ENCODE measurements at regions of chr13 and their contacts with region 1.

Region 1: DNA sequence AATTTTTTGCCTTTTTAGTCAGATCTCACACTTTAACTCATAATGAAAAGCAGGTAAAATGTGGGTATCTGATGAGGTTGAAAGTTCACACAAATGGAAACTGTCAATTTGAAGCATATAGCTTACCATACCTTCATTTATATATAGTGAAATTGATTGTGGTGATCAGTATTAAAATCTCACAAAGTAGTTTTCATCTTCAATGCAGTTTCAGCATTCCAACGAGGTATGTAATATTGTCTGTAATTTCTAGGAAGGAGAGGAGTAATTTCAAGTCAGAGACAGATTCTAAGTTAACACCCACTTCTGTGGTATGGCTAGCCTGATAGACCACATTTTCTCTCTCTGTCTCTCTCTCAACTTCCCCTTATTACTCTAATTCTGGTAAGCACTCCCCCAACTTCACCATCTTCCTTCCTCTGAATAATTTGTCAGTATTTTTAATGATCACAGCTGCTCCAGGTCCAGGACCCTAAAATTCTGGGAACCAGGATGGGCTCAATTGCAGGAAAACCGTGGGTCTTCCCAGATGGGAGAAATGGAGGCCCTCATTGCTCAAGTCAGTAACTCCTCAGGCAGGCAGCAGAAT is 455.7 kb downstream of the FGF9 start:
- DNase-seq: no peak
- H3K4me3 Mint-ChIP-seq: peak overlapping the region; percentile 18
- H3K27ac Mint-ChIP-seq: peak overlapping the region; percentile 76
- H3K4me1 Mint-ChIP-seq: peaks cover 40% of the 10 kb centered on the region
- H3K27me3 Mint-ChIP-seq: no peaks in the 10 kb centered on the region

Region 2: GRCh38 chr13:21853779-21854178 is 272.7 kb before region 1 on chr13:
- intact Hi-C with region 1: no loop called
- DNase-seq: no peak
- H3K4me3 Mint-ChIP-seq: no peak overlapping the region
- H3K27ac Mint-ChIP-seq: no peak overlapping the region
- H3K4me1 Mint-ChIP-seq: no peaks in the 10 kb centered on the region
- H3K27me3 Mint-ChIP-seq: peaks cover 3% of the 10 kb centered on the region

Region 3: DNA sequence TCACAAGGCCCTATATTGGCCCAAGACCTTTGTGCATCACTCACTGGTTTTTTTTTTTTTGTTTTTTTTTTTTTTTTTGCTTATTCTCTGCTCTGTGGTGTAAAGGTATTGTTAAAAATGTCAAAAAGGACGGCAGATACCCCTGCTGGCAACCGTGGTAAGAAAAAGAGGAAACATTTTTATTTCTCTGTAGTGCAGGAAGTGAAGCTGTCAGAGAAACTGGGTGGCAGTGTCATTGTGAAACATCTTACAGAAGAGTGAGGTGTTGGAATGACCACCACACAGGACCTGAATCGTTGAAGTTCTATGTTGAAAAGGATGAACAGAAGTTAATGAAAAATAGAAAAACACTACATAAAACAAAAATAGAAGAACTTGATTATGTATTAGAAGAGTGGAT is 109.3 kb before region 1 on chr13:
- intact Hi-C with region 1: loop called (anchors 5 kb)
- DNase-seq: peak; percentile 62
- H3K4me3 Mint-ChIP-seq: no peak overlapping the region
- H3K27ac Mint-ChIP-seq: no peak overlapping the region
- H3K4me1 Mint-ChIP-seq: peaks cover 5% of the 10 kb centered on the region
- H3K27me3 Mint-ChIP-seq: no peaks in the 10 kb centered on the region

Region 4: DNA sequence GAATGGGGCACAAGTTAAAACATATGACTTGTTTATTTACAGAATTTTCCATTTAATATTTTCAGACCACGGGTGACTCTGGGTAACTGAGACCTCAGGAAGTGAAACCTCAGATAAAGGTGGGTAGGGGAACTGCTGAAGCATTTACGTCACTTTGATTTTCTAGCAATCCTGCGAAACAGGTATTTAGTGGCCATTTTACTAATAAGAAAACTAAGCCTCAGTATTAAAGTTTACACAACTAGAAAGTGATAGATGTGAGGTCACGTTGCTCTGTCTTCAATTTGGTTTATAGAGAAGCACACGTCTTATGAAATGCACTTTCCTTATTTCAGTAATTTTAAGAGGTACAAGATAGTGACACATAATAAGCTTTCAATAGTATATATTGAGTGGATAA is 52.8 kb before region 1 on chr13:
- intact Hi-C with region 1: loop called (anchors 1 kb)
- DNase-seq: no peak
- H3K4me3 Mint-ChIP-seq: peak overlapping the region; percentile 15
- H3K27ac Mint-ChIP-seq: peak overlapping the region; percentile 58
- H3K4me1 Mint-ChIP-seq: peaks cover 42% of the 10 kb centered on the region
- H3K27me3 Mint-ChIP-seq: no peaks in the 10 kb centered on the region

Region 5: DNA sequence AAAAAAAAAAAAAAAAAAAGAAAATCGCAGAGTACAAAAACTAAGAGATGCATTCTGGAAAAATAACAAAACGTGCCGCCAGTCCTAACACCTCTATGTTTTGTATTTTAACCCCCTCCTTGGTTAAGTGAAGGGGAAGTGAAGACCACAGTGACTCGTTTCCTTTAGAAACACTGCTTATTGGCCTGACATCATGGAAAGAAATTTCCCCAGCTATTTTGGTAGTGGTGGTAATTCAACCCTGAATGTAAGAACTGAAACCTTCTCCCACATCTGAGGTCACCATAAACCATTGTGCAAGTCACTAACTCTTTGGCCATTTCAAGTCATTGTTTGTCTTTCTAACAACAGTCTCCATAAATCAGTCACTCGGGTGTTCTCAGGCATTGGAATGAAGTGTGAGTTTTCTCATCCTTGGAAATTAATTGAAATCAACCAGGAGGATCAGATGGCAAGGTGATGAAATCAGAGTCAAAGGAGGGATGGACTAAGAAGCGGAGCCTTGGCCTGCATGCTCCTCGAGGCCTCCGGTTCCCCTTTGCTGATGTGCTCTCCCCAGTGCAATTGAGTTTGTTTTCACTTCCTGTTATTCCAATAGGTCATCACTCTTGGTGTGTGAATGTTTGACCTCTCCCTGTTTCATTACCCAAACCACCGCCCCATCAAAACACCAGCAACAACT is 11.8 kb before region 1 on chr13:
- intact Hi-C with region 1: loop called (anchors 1 kb)
- DNase-seq: peak; percentile 88
- H3K4me3 Mint-ChIP-seq: peak overlapping the region; percentile 53
- H3K27ac Mint-ChIP-seq: peak overlapping the region; percentile 94
- H3K4me1 Mint-ChIP-seq: peaks cover 55% of the 10 kb centered on the region
- H3K27me3 Mint-ChIP-seq: no peaks in the 10 kb centered on the region

Region 6: GRCh38 chr13:22141716-22142115 is 15.2 kb after region 1 on chr13:
- intact Hi-C with region 1: loop called (anchors 2 kb)
- DNase-seq: no peak
- H3K4me3 Mint-ChIP-seq: no peak overlapping the region
- H3K27ac Mint-ChIP-seq: no peak overlapping the region
- H3K4me1 Mint-ChIP-seq: peaks cover 12% of the 10 kb centered on the region
- H3K27me3 Mint-ChIP-seq: peaks cover 1% of the 10 kb centered on the region

Region 7: GRCh38 chr13:22161871-22162270 is 35.3 kb after region 1 on chr13:
- intact Hi-C with region 1: loop called (anchors 2 kb)
- DNase-seq: no peak
- H3K4me3 Mint-ChIP-seq: no peak overlapping the region
- H3K27ac Mint-ChIP-seq: no peak overlapping the region
- H3K4me1 Mint-ChIP-seq: peaks cover 15% of the 10 kb centered on the region
- H3K27me3 Mint-ChIP-seq: peaks cover 1% of the 10 kb centered on the region